ENCODE measurements at regions of chr11 and their contacts with region 1.

Region 1: DNA sequence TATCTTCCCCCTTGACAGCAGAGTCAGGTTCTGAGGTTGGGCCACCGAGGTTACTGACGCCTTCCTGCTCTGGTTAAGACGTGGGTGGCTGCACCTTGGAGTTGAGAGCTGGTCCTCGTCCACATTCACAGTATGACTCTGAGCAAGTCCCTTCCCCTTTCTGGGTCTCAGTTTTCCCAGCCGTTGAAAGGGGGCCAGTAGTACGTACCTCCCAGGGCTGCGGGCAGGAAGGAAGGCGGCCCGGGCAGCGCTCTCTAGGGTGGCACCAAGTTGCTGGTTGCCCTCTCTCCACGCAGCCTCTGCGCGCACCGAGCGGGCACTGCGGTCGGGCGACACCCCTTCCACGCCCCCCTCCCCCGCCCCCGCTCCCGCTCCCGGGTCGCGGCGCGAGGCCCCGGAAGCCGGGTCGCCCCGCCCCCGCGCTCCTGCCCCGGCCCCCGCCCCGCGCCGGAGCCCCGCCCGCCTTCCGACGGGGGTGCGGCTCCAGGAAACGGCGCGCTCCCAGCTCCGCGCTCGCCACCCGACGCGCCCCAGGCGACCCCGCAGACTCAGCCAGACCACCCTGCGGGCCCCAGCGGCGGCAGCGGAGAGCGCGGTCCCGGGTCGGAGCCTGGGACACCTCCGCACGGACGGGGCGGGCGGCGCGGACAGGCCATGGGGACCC is at the start of gene EHBP1L1:
- DNase-seq: peak in 1 of 2 experiments; percentile 80
- H3K4me3 ChIP-seq: peak within 1 kb of the TSS; percentile 81
- H3K27ac ChIP-seq: peak within 1 kb of the TSS; percentile 52
- H3K4me1 ChIP-seq: peaks cover 55% of the 10 kb centered on the region
- H3K27me3 ChIP-seq: no peaks in the 10 kb centered on the region
- CTCF ChIP-seq: no peak
- total RNA-seq, gene EHBP1L1: 123 and 170 TPM in 2 replicates

Region 2: GRCh38 chr11:65593518-65594298 is 18.0 kb after region 1 on chr11:
- CTCF ChIA-PET with region 1: interaction called, 12 read pairs
- POLR2A ChIA-PET with region 1: interaction called, 3 read pairs
- intact Hi-C with region 1: no loop called
- DNase-seq: peak in 1 of 2 experiments; percentile 29
- H3K4me3 ChIP-seq: no peak overlapping the region
- H3K27ac ChIP-seq: no peak overlapping the region
- H3K4me1 ChIP-seq: 0 out of 2 replicates have a peak, but pooled peaks cover 7% of the 10 kb centered on the region
- H3K27me3 ChIP-seq: no peaks in the 10 kb centered on the region
- CTCF ChIP-seq: peak; percentile 67

Region 3: DNA sequence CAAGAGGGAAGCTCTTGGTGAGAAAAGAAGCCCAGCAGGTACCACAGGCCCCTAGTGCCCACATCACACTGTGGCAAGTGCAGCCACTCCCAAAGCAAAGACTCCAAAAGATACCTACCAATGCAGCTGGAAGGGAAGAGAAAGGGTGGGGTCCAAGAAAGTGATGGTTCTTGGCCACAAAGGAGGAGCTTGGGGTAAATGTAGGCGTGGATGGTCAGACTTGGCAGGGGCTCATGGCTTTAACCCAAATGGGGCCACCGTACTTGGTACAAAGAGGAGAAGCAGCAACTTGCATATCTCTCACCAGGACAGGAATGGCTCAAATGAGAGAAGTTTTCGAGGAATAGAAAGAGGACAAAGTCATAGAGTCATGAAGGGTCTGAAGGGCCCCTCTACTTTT is 33.5 kb after region 1 on chr11:
- CTCF ChIA-PET with region 1: no interaction called
- POLR2A ChIA-PET with region 1: interaction called, 12 read pairs
- intact Hi-C with region 1: no loop called
- DNase-seq: no peak
- H3K4me3 ChIP-seq: no peak overlapping the region
- H3K27ac ChIP-seq: no peak overlapping the region
- H3K4me1 ChIP-seq: peaks cover 16% of the 10 kb centered on the region; the same call in 1 of the 2 replicates
- H3K27me3 ChIP-seq: no peaks in the 10 kb centered on the region
- CTCF ChIP-seq: no peak

Region 4: DNA sequence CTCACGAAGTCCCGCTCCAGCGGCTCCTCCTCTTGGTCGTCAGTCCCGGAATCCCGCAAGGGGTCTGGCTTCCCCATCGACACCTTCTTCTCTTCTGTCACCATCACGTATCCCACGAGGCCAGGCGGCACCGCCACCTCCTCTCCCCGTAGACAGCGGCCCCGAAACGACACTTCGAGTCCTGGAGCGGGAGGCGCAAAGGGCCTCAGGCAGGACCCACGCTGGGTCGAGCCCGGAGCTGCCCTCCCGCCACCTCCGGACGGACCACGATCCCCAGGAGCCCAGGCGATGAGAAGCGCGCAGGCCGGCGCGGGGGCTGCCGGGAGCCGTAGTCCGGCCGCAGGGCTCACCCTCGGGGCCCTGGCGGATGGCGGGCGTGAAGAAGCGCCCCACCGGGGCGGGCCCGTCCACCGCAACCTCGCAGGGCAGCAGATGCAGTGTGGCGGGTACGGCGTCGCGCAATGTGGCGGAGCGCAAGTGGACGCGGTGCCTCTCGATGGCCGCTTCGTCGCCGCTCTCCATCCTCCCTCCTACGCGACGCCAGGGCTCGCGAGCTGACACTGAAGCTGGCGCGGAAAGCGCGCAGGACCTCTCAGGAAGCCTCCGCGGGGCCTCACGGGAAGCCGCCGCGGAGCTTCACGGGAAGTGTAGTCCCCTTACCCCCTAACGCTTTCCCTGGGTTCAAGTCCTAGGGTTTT is 144.7 kb after region 1 on chr11 and contains the start of gene RNASEH2C:
- CTCF ChIA-PET with region 1: no interaction called
- POLR2A ChIA-PET with region 1: interaction called, 16 read pairs
- intact Hi-C with region 1: no loop called
- DNase-seq: peak; percentile 75 to 80
- H3K4me3 ChIP-seq: peak within 1 kb of the TSS; percentile 90
- H3K27ac ChIP-seq: no peak within 1 kb of the TSS
- H3K4me1 ChIP-seq: peaks cover 9% of the 10 kb centered on the region
- H3K27me3 ChIP-seq: no peaks in the 10 kb centered on the region
- CTCF ChIP-seq: no peak
- total RNA-seq, gene RNASEH2C: 31.8 and 42.4 TPM in 2 replicates

Region 5: DNA sequence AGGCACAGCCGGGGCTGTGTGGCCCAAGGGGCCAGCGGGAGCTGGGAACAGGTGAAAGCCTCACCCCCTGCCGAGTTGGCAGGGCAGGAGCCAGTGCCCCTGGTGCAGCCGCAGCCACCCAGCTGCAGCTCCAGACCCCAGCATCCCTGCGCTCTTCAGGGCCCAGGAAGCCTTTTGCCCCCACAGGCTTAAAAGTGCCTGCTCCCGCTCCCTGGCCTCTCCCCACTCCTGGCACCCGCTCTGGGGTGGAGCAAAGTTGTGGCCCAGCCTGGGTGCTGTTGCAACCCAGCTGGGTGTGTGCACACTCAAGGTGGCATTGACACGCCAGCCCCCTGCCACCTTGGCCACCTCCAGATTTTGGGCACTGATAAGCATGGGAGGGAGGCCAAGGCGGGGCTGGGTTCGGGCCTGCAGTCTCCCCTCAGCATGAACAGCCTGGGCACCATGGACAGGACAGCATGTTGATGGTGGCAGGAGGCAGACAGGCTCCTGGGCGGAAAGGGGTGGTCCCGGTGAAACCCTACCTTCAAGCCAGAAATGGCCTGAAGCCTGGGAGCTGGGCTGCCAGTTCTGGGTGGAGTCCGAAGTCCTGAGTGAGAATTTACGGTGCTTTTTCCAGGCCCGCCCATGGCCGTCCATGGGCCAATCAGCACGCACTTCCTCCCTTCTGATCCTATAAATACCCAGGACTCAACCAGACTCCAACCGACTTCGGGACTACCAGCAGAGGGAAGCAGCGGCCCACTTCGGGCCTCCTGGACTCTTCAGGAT is 168.4 kb after region 1 on chr11:
- CTCF ChIA-PET with region 1: no interaction called
- POLR2A ChIA-PET with region 1: no interaction called
- intact Hi-C with region 1: no loop called
- DNase-seq: peak; percentile 28 to 72
- H3K4me3 ChIP-seq: no peak overlapping the region
- H3K27ac ChIP-seq: no peak overlapping the region
- H3K4me1 ChIP-seq: 0 out of 2 replicates have a peak, but pooled peaks cover 4% of the 10 kb centered on the region
- H3K27me3 ChIP-seq: peaks cover 8% of the 10 kb centered on the region; the same call in 1 of the 2 replicates
- CTCF ChIP-seq: peak; percentile 81

Region 6: DNA sequence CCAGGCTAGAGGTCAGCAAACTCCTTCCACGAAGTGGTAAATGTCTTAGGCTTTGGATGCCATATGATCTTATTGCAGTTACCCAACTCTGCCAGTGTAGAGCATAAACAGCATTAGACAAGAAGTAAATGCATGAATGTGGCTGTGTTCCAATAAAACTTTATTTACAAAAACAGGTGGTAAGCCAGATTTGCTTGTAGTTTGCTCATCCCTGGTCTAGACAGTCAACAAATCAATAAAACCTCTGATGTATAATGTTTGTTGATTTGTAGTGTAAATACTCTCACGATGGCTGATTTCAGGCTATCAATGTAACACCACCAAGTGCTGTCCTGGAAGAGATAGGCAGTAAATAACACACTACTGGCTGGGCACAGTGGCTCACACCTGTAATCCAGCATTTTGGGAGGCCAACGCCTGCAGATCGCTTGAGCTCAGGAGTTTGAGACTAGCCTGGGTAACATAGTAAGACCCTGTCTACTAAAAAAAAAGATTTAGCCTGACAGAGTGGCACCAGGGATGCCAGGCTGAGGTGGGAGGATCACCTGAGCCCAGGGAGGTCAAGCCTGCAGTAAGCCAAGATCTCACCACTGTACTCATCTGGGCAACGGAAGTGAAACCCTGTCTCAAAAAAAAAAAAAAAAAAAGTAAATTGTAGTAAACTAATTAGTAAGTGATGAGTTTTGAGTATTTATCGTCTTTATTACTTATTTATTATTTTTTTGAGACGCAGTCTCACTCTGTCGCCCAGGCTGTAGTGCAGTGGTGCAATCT is 457.4 kb after region 1 on chr11:
- CTCF ChIA-PET with region 1: no interaction called
- POLR2A ChIA-PET with region 1: no interaction called
- intact Hi-C with region 1: no loop called
- DNase-seq: no peak
- H3K4me3 ChIP-seq: no peak overlapping the region
- H3K27ac ChIP-seq: no peak overlapping the region
- H3K4me1 ChIP-seq: no peaks in the 10 kb centered on the region
- H3K27me3 ChIP-seq: no peaks in the 10 kb centered on the region
- CTCF ChIP-seq: no peak

Measured in PC-9 (cell line).